ENCODE measurements at regions of chr6 and their contacts with region 1.

Region 1: DNA sequence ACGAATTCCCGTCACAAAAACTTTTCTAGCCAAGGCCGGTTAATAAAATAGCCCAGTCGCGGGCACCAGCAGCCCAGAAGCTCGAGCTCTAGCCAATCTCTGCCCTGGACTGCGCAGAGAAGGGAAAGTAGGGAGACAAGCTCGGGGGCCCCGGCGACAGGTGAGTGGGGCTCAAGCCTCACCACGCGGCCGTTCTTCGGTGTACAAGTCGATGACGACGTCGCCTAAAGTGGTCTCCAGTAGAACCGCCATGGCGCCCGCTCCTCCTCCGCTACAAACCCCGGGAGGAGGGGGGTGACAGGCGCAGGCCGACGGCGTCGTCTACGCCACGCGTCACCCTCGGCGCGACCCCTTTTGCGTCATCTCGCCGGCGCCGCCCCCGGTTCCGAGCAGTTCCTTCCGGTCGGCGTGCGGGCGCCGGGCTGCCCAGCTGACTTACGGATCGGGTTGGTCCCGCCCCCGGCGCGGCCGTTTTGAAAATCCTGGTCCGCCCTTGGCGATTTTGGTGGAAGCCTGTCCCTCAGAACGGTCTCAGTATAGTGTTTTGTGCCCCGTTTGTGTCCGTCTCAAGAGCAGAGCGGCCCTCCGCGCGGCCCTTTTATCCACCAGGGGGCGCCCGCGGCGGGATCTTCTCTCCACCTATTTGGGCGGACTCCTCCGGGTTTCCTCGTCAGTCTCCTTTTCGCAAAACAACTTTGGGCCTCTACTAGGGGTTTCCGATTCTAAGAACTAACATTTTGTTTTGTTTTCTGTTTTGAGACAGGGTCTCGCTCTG is at the start of gene PPIL4:
- DNase-seq: peak; percentile 96

Region 2: GRCh38 chr6:149513915-149514314 is 32.0 kb before region 1 on chr6:
- CTCF ChIA-PET with region 1: no interaction called
- POLR2A ChIA-PET with region 1: no interaction called
- DNase-seq: no peak

Region 3: GRCh38 chr6:149565527-149566409 is 19.8 kb after region 1 on chr6 and contains the start of gene GINM1:
- CTCF ChIA-PET with region 1: interaction called, 5 read pairs
- POLR2A ChIA-PET with region 1: interaction called, 16 read pairs
- DNase-seq: peak; percentile 99

Region 4: DNA sequence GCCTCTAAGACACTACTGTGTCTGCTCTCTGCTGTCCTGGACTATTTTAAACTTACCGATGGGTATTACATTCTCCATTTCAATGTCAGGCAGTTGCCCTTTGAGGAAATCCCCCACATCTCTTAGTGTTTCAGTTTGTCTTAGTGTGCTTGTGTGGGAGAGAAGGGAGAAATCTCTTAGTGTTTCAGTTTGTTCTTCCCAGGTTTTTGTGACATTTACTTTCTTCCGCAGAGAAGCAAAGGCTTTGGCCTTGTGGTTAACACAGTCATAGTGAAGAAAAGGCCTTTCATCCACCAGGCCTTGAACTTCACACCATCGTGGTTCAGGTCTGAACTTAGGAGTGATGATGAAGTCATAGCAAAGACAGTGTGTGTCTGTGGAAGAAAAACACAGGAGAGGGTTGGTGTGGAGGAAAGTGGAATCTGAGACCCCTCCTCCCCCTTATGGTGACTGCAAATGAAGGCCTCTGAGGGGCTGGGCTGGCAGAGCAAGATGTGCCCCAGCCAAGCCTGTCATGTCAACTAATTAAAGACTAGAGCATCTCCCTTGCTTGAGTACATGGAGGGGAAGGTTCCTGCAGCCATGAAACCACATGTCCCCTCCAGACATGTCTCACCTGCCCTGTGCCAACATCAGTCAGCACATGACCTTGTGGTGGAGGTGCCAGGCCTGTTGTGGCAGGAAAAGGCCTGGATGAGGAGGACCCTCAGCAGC is 455.5 kb after region 1 on chr6:
- CTCF ChIA-PET with region 1: no interaction called
- POLR2A ChIA-PET with region 1: no interaction called
- DNase-seq: no peak

Measured in HEK293T (cell line).